Right ventricle myocardium inferior (tissue), 1 donor: ENCODE measurements at regions of chr13 and their contacts with region 1.

Region 1: GRCh38 chr13:23375001-23375971 is 58.2 kb downstream of the SACS start:
- DNase-seq: peak; percentile 99
- ATAC-seq: peak; percentile 98

Region 2: GRCh38 chr13:23411706-23412105 is 36.4 kb after region 1 on chr13:
- intact Hi-C with region 1: loop called (anchors 5 kb)
- DNase-seq: no peak
- ATAC-seq: peak; percentile 79